ENCODE measurements at regions of chr1 and their contacts with region 1.

Region 1: GRCh38 chr1:186289943-186290545 is 85.0 kb downstream of the TPR start:
- DNase-seq: no peak
- H3K4me3 Mint-ChIP-seq: peak overlapping the region; percentile 24
- H3K27ac Mint-ChIP-seq: peak overlapping the region; percentile 92
- H3K4me1 Mint-ChIP-seq: peaks cover 65% of the 10 kb centered on the region
- H3K27me3 Mint-ChIP-seq: peaks cover 2% of the 10 kb centered on the region

Region 2: GRCh38 chr1:186337554-186337953 is 47.5 kb after region 1 on chr1:
- CTCF ChIA-PET with region 1: no interaction called
- POLR2A ChIA-PET with region 1: no interaction called
- intact Hi-C with region 1: no loop called
- DNase-seq: no peak
- H3K4me3 Mint-ChIP-seq: no peak overlapping the region
- H3K27ac Mint-ChIP-seq: no peak overlapping the region
- H3K4me1 Mint-ChIP-seq: no peaks in the 10 kb centered on the region
- H3K27me3 Mint-ChIP-seq: no peaks in the 10 kb centered on the region

Region 3: DNA sequence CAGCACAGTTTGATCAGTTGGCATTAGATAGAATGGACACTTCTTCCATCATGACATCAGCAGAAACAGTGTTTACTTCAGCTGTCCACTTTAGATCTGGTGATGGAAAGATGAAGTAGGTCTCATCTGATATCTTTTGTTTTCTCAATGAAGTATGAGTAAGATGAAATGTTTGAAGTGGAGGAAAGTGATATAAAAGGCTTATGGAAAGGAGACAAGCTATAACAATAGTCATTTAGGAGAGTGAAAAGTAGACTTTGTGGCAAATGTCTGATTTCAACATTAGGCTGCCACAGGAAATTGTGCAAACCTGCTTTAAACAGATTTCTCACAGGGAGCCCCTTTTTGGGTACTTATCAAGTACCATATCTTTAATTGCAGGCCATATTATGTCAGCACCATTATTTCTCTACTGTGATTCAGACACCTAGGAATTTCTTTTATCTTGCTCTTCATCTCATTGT is 152.6 kb after region 1 on chr1:
- CTCF ChIA-PET with region 1: no interaction called
- POLR2A ChIA-PET with region 1: no interaction called
- intact Hi-C with region 1: loop called (anchors 5 kb)
- DNase-seq: no peak
- H3K4me3 Mint-ChIP-seq: no peak overlapping the region
- H3K27ac Mint-ChIP-seq: no peak overlapping the region
- H3K4me1 Mint-ChIP-seq: peaks cover 15% of the 10 kb centered on the region
- H3K27me3 Mint-ChIP-seq: no peaks in the 10 kb centered on the region